Naive thymus-derived CD8-positive, alpha-beta T cell (primary cell): ENCODE measurements at regions of chr6 and their contacts with region 1.

Region 1: DNA sequence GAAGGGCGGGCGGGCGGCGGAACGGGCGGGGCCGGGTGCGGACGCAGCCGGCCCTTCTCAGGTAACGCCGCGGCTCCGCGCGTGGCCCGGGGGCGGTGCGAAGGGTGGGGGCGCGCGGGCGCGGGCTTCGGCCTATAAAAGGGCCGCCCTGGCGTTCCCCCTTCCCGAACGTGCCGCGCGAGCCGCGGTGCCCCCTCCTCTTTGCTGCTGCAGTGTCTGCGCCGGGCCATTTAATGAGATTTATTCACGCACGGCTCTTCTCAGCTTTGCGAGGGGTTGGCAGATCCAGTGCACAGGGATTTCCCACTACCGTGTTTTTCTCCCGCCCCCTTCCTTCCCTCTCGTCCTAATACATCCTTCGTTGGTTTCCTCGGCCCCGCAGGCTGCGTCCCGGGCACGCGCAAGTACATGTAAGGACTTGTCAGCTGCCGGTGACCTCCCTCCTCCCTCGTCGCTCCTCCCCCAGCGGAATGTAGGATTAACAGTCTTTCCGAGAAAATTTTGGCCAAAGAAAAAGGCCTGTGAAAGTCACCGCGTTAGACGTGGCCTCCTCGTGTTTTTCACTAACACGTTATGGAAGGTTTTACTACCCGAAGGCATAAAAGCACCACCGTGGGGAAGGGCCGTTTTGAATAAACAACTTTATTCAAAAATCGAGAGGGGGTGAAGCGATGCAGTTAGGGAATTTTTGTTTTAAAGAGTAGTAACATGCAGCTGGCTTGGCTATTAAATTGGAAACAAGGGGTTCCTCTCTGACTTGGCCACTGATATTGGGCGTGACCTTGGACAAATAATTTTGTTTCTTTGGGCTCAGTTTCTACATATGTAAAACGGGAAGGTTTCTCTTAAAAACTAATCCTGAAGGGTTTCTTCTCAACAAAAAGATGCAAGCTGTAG is 966 bp upstream of the REV3L start:
- DNase-seq: peak in 6 of 10 donors; percentile 63 to 91 (median 82)
- ATAC-seq: peak in 1 of 2 donors; percentile 26
- H3K4me3 Mint-ChIP-seq: peak overlapping the region; percentile 95 to 100 (median 97)
- H3K27ac Mint-ChIP-seq: peak overlapping the region; percentile 96 to 100 (median 99)
- H3K4me1 Mint-ChIP-seq: peaks cover 16 to 50% (median 39%) of the 10 kb centered on the region in 4 donors
- H3K27me3 Mint-ChIP-seq: no peaks in the 10 kb centered on the region

Region 2: GRCh38 chr6:111605100-111605751 is 121.2 kb after region 1 on chr6:
- POLR2A ChIA-PET with region 1: interaction called, 24 read pairs
- DNase-seq: peak in 5 of 10 donors; percentile 5 to 61 (median 20)
- ATAC-seq: peak; percentile 65 to 71
- H3K4me3 Mint-ChIP-seq: peak overlapping the region; percentile 91 to 97 (median 94)
- H3K27ac Mint-ChIP-seq: peak overlapping the region; percentile 92 to 98 (median 95)
- H3K4me1 Mint-ChIP-seq: peaks cover 17 to 62% (median 55%) of the 10 kb centered on the region in 4 donors
- H3K27me3 Mint-ChIP-seq: no peaks in the 10 kb centered on the region